ENCODE measurements at regions of chr17 and their contacts with region 1.

Region 1: GRCh38 chr17:55295411-55296170 is 30.8 kb downstream of the HLF start:
- DNase-seq: peak; percentile 57
- ATAC-seq: peak; percentile 98
- H3K4me3 ChIP-seq: no peak overlapping the region
- H3K27ac ChIP-seq: no peak overlapping the region
- H3K4me1 ChIP-seq: no peaks in the 10 kb centered on the region
- H3K27me3 ChIP-seq: no peaks in the 10 kb centered on the region
- CTCF ChIP-seq: peak; percentile 72 to 93 (median 83)
- POLR2A ChIP-seq: no peak
- RAD21 ChIP-seq: peak; percentile 83

Region 2: GRCh38 chr17:54867634-54868033 is 428.0 kb before region 1 on chr17:
- CTCF ChIA-PET with region 1: no interaction called
- POLR2A ChIA-PET with region 1: no interaction called
- RAD21 ChIA-PET with region 1: no interaction called
- intact Hi-C with region 1: no loop called
- DNase-seq: no peak
- ATAC-seq: 0 out of 2 replicates have a peak, but pooled peaks have one; percentile 36
- H3K4me3 ChIP-seq: no peak overlapping the region
- H3K27ac ChIP-seq: no peak overlapping the region
- H3K4me1 ChIP-seq: no peaks in the 10 kb centered on the region
- H3K27me3 ChIP-seq: peaks cover 5% of the 10 kb centered on the region
- CTCF ChIP-seq: no peak
- POLR2A ChIP-seq: no peak
- RAD21 ChIP-seq: no peak

Region 3: GRCh38 chr17:55053855-55054254 is 241.7 kb before region 1 on chr17:
- CTCF ChIA-PET with region 1: no interaction called
- POLR2A ChIA-PET with region 1: no interaction called
- RAD21 ChIA-PET with region 1: no interaction called
- intact Hi-C with region 1: loop called (anchors 1 kb)
- DNase-seq: no peak
- ATAC-seq: peak; percentile 54
- H3K4me3 ChIP-seq: no peak overlapping the region
- H3K27ac ChIP-seq: no peak overlapping the region
- H3K4me1 ChIP-seq: no peaks in the 10 kb centered on the region; a peak in 1 of 4 replicates
- H3K27me3 ChIP-seq: no peaks in the 10 kb centered on the region
- CTCF ChIP-seq: peak; percentile 40 to 60 (median 56); a peak in 5 of 6 replicates
- POLR2A ChIP-seq: no peak
- RAD21 ChIP-seq: peak; percentile 67

Region 4: DNA sequence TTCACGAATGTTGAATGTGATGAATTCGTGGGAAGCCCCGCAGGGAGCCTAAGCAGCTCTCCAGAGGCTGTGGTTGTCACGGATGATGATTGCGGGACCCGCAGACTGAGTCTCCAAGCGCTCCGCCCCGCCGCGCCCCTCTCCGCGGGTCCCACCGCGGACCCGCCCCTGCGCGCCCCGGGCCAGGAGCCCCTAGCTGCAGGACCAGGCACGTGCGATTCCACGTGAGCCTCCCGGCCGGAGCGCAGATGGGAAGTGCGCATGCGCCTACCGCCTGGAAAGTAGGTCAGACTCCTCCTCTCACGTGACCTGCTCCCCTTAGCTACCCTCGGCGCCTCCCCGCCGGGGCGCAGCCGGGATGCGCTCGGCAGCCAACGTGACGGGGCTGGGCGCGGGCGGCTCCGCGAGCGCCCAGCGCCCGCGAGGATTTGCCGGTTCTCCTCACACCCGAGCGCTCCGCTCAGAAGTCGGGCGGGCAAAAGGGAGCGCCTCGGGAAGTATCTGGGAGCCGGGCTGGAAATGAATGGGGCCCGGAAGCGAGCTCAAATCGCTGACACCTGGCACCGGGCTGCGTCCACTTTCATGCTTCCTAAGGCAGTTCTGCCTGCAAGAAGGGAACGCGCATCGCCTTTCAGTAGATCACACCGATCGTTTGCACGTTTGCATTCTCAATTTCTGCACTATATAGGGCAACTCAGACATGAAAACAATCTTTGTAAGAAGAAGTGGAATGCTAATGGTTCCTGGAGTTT is 57.2 kb before region 1 on chr17:
- CTCF ChIA-PET with region 1: interaction called, 3 read pairs
- POLR2A ChIA-PET with region 1: no interaction called
- RAD21 ChIA-PET with region 1: interaction called in 1 of 2 experiments, 3 read pairs
- intact Hi-C with region 1: loop called (anchors 2 kb)
- DNase-seq: peak; percentile 92
- ATAC-seq: peak; percentile 98
- H3K4me3 ChIP-seq: peak overlapping the region; percentile 45 to 63
- H3K27ac ChIP-seq: peak overlapping the region; percentile 59
- H3K4me1 ChIP-seq: peaks cover 12 to 16% of the 10 kb centered on the region in 2 experiments
- H3K27me3 ChIP-seq: no peaks in the 10 kb centered on the region
- CTCF ChIP-seq: no peak
- POLR2A ChIP-seq: peak; percentile 66
- RAD21 ChIP-seq: no peak

Region 5: DNA sequence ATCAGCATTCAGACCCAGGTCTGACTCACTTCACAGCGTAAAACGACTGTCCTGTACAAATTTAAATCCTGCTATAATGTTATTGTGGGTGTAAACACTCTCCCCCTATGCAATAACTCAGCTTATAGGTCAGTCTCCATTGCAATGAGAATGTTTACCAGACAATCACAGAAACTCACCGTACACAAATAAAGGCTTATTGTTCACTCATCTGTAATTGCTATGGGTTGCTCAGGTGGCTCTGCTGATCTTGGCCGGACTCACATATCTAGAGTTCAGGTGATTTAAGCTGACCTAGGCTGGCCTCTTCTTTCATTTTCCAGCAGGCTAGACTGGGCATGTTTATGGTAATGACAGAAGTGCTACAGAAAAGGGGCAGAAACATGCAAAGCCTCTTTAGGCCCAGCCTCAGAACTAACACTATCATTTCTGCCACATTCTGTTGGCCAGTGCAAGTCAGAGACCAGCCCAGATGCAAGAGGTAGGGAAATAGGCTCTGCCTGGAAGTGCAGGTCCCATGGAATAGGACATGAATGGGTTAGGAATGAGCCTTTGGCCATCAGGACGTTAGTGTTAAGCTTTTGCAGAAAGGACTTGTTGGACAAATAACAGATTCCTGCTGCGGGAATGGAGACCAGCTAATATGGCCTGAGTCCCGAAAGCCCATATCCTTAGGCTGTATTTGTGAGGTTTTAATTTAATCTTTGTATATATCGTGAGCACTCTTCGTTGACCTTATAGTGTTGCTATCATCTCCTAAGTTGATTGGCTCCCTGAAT is 13.2 kb after region 1 on chr17:
- CTCF ChIA-PET with region 1: no interaction called
- POLR2A ChIA-PET with region 1: no interaction called
- RAD21 ChIA-PET with region 1: no interaction called
- intact Hi-C with region 1: no loop called
- DNase-seq: no peak
- ATAC-seq: no peak
- H3K4me3 ChIP-seq: no peak overlapping the region
- H3K27ac ChIP-seq: no peak overlapping the region
- H3K4me1 ChIP-seq: no peaks in the 10 kb centered on the region
- H3K27me3 ChIP-seq: no peaks in the 10 kb centered on the region
- CTCF ChIP-seq: no peak
- POLR2A ChIP-seq: no peak
- RAD21 ChIP-seq: no peak

Region 6: DNA sequence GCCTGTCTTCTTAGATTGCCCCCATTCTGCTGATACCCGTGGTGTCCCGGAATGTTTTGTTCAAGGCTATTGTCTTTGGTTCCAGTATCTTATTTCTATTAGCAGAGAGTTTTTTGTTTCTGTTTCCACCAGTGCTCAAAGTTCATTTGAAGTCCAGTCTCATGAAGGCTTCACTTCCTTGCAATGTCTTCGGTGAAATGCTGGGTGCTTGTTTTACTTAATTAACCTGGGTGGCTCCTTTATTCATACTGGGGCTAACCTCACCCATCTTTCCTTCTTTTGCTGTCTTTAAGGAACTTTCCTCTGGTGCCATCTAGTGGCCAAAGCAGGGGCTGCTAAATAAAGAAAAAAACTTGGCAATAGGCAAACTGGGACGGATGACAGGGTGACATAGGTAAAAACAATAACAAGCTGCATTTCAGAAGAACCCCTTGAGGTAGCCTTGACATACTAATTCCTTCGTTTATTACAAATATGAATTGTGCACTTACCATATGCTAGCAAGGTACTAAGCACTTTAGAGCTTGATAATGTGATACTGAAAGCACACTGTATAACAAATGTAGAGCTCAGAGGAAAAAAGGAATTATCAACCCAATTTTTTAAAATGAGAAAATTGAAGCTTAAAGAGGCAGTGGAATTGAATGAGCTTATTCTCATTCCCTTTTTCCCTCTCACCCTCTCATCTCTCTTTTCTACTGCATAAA is 218.4 kb after region 1 on chr17:
- CTCF ChIA-PET with region 1: interaction called, 3 read pairs
- POLR2A ChIA-PET with region 1: no interaction called
- RAD21 ChIA-PET with region 1: interaction called in 1 of 2 experiments, 3 read pairs
- intact Hi-C with region 1: loop called (anchors 5 kb)
- DNase-seq: peak; percentile 70
- ATAC-seq: peak; percentile 96
- H3K4me3 ChIP-seq: no peak overlapping the region
- H3K27ac ChIP-seq: no peak overlapping the region
- H3K4me1 ChIP-seq: 0 out of 4 replicates have a peak, but pooled peaks cover 0 to 4% of the 10 kb centered on the region in 2 experiments
- H3K27me3 ChIP-seq: peaks cover 45% of the 10 kb centered on the region
- CTCF ChIP-seq: peak; percentile 91 to 99 (median 98)
- POLR2A ChIP-seq: no peak
- RAD21 ChIP-seq: peak; percentile 96